ENCODE measurements at regions of chr2 and their contacts with region 1.

Region 1: DNA sequence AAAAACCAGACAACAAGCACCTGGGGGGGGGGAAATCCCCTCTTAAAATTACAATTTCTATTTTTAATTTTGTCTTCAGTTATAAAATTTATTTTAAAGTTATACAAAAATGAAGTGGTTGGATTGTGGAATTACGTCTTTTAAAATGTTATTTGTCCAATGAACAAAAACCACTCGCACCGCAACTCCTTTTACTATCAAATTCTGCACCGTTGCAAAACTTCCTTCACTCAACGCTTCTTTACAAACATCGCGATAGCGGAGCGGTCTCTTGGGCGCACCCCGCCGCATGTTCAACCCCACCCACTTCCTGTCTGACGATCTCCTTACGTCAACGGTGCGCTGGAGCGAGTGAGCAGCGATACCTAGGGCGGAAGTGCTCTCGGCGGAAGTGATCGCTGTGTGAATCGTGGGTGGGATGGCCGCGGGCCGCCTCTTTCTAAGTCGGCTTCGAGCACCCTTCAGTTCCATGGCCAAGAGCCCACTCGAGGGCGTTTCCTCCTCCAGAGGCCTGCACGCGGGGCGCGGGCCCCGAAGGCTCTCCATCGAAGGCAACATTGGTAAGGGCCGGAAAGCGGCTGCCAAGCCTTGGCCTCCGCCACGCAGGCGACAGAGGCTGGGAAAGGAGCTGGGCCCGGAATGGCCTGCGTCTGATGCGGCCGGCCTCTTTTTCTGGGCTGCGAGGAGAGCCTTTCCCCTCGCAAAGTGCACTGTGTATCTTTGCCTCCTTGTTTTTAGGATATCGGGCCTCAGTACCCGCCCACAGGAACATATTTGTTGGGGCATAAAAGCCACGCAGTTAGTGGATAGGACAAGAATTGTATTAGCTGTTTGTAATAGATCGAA is at the start of gene DGUOK:
- DNase-seq: peak; percentile 98
- H3K4me3 Mint-ChIP-seq: peak within 1 kb of the TSS; percentile 88
- H3K27ac Mint-ChIP-seq: peak within 1 kb of the TSS; percentile 92
- H3K4me1 Mint-ChIP-seq: peaks cover 57% of the 10 kb centered on the region
- H3K27me3 Mint-ChIP-seq: peaks cover 2% of the 10 kb centered on the region
- total RNA-seq, gene DGUOK: 75.6 to 76.3 TPM

Region 2: GRCh38 chr2:73503992-73504570 is 422.6 kb before region 1 on chr2:
- CTCF ChIA-PET with region 1: no interaction called
- POLR2A ChIA-PET with region 1: no interaction called
- DNase-seq: no peak
- H3K4me3 Mint-ChIP-seq: no peak overlapping the region
- H3K27ac Mint-ChIP-seq: no peak overlapping the region
- H3K4me1 Mint-ChIP-seq: no peaks in the 10 kb centered on the region
- H3K27me3 Mint-ChIP-seq: no peaks in the 10 kb centered on the region

Region 3: GRCh38 chr2:73939419-73939818 is 12.7 kb after region 1 on chr2:
- CTCF ChIA-PET with region 1: no interaction called
- POLR2A ChIA-PET with region 1: interaction called, 20 read pairs
- DNase-seq: no peak
- H3K4me3 Mint-ChIP-seq: no peak overlapping the region
- H3K27ac Mint-ChIP-seq: no peak overlapping the region
- H3K4me1 Mint-ChIP-seq: peaks cover 53% of the 10 kb centered on the region
- H3K27me3 Mint-ChIP-seq: no peaks in the 10 kb centered on the region

Region 4: GRCh38 chr2:73970850-73971471 is 44.2 kb after region 1 on chr2:
- CTCF ChIA-PET with region 1: interaction called, 3 read pairs
- POLR2A ChIA-PET with region 1: interaction called, 19 read pairs
- DNase-seq: peak; percentile 62
- H3K4me3 Mint-ChIP-seq: peak overlapping the region; percentile 50
- H3K27ac Mint-ChIP-seq: peak overlapping the region; percentile 69
- H3K4me1 Mint-ChIP-seq: peaks cover 32% of the 10 kb centered on the region
- H3K27me3 Mint-ChIP-seq: peaks cover 2% of the 10 kb centered on the region

Region 5: DNA sequence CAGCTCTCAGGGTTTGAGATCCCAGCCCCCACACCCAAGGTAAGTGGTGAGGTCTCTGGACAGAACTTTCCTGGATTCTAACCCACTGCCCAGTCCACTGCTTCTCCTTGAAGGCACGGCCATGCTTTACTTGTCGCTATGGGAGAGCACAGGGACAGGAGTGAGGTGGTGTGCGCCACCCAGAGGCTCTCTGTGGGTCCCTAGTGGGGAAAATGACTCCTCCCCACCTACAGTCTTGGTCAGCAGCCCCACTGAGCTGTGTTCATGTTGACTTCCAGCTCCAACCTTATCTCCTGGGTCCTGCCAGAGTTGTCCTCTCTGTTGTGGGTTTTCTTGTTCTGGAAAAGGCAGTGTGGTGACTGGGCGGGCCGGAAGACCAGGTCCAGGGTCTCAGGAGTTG is 69.1 kb after region 1 on chr2:
- CTCF ChIA-PET with region 1: no interaction called
- POLR2A ChIA-PET with region 1: no interaction called
- DNase-seq: no peak
- H3K4me3 Mint-ChIP-seq: no peak overlapping the region
- H3K27ac Mint-ChIP-seq: no peak overlapping the region
- H3K4me1 Mint-ChIP-seq: peaks cover 43% of the 10 kb centered on the region
- H3K27me3 Mint-ChIP-seq: no peaks in the 10 kb centered on the region

Measured in activated CD4-positive, alpha-beta memory T cell treated with anti-CD3 and anti-CD28 coated beads, Interleukin-2, amount 10 ng/mL, durations not matched to agents 7 days and 5 days (primary cell).